Natural killer cell (primary cell): ENCODE measurements at regions of chr9 and their contacts with region 1.

Region 1: GRCh38 chr9:34178520-34179212 is at the start of gene UBAP1:
- DNase-seq: peak; percentile 93 to 98
- ATAC-seq: peak; percentile 95 to 99 (median 97)
- H3K4me3 ChIP-seq: peak within 1 kb of the TSS; percentile 83
- H3K4me3 Mint-ChIP-seq: peak within 1 kb of the TSS; percentile 98
- H3K27ac ChIP-seq: peak within 1 kb of the TSS; percentile 95
- H3K27ac Mint-ChIP-seq: peak within 1 kb of the TSS; percentile 97 to 98
- H3K4me1 ChIP-seq: peaks cover 27% of the 10 kb centered on the region
- H3K4me1 Mint-ChIP-seq: peaks cover 26 to 28% of the 10 kb centered on the region in 2 donors
- H3K27me3 ChIP-seq: no peaks in the 10 kb centered on the region
- H3K27me3 Mint-ChIP-seq: no peaks in the 10 kb centered on the region
- CTCF ChIP-seq: no peak
- total RNA-seq, gene UBAP1: 43.6 to 59.3 (median 49.7) TPM

Region 2: DNA sequence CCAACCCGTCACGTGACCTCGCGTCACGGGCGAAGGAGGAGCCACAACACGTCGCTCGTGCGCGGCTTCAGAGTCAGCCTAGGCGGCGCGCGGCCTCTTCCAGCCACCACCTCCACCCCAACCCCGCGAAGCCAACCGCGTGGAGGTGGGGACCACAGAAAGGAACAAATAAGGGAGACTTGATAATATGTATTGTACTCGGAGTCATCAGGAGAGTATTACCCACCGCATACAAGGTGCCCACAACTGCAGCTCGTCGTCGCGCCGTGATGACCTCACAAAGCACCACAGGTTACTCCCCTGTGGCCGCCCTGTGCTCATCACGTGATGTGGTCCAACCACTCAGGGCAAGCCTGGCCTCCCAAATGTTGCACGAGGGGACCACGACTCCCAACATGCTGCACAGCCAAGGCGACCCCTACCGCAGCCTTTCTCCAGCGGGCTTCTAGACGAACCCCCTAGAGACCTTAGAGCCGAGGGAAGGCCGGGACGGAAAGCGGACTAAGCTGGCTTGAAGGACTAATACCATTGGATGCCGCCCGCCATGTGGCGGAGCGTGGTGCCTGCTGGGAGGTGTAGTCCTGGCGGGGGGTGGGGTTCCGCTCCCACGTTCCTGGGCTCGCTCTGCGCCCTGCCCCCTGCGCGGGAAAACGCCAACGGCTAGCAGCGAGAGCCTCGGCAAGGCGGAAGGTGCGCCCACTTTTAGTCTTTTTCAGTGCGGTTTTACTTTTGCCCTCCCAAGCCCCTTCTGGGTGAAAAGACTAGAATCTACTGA is 129.6 kb before region 1 on chr9:
- intact Hi-C with region 1: loop called (anchors 2 kb)
- DNase-seq: peak; percentile 98
- ATAC-seq: peak; percentile 83 to 94 (median 86)
- H3K4me3 ChIP-seq: peak overlapping the region; percentile 88
- H3K4me3 Mint-ChIP-seq: peak overlapping the region; percentile 96
- H3K27ac ChIP-seq: peak overlapping the region; percentile 82
- H3K27ac Mint-ChIP-seq: peak overlapping the region; percentile 99
- H3K4me1 ChIP-seq: peaks cover 16% of the 10 kb centered on the region
- H3K4me1 Mint-ChIP-seq: peaks cover 24 to 30% of the 10 kb centered on the region in 2 donors
- H3K27me3 ChIP-seq: no peaks in the 10 kb centered on the region
- H3K27me3 Mint-ChIP-seq: no peaks in the 10 kb centered on the region
- CTCF ChIP-seq: no peak

Region 3: GRCh38 chr9:34190996-34191892 is 12.6 kb after region 1 on chr9:
- intact Hi-C with region 1: loop called (anchors 2 kb)
- DNase-seq: no peak
- ATAC-seq: no peak
- H3K4me3 ChIP-seq: no peak overlapping the region
- H3K4me3 Mint-ChIP-seq: peak overlapping the region; percentile 45
- H3K27ac ChIP-seq: no peak overlapping the region
- H3K27ac Mint-ChIP-seq: peak overlapping the region; percentile 71 to 73
- H3K4me1 ChIP-seq: peaks cover 46% of the 10 kb centered on the region
- H3K4me1 Mint-ChIP-seq: peaks cover 47 to 50% of the 10 kb centered on the region in 2 donors
- H3K27me3 ChIP-seq: no peaks in the 10 kb centered on the region
- H3K27me3 Mint-ChIP-seq: no peaks in the 10 kb centered on the region
- CTCF ChIP-seq: no peak

Region 4: DNA sequence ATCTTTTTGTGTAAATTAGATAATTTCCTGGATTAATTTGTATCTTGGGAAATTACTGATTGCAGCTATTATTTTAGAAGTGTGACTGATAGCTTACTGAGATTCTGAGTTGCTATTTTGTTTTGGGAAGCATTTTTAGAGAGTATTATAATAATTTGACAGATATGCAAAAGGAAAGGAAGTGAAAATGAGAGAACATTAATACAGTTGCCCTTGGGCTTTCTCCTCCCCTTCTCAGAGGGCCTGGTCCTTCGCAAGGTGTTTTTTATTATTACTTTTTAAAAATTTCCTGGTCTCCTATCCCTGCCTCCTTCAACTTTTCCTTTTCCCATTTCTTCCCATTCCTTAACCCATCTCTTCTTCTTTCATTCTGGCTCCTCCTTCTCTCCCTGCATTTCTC is 32.7 kb after region 1 on chr9:
- intact Hi-C with region 1: loop called (anchors 5 kb)
- DNase-seq: no peak
- ATAC-seq: no peak
- H3K4me3 ChIP-seq: no peak overlapping the region
- H3K4me3 Mint-ChIP-seq: no peak overlapping the region
- H3K27ac ChIP-seq: no peak overlapping the region
- H3K27ac Mint-ChIP-seq: peak overlapping the region in 1 of 2 donors; percentile 29
- H3K4me1 ChIP-seq: no peaks in the 10 kb centered on the region
- H3K4me1 Mint-ChIP-seq: peaks cover 44 to 49% of the 10 kb centered on the region in 2 donors
- H3K27me3 ChIP-seq: no peaks in the 10 kb centered on the region
- H3K27me3 Mint-ChIP-seq: no peaks in the 10 kb centered on the region
- CTCF ChIP-seq: no peak

Region 5: GRCh38 chr9:34252670-34253459 is 74.2 kb after region 1 on chr9:
- intact Hi-C with region 1: loop called (anchors 2 kb)
- DNase-seq: peak; percentile 66 to 82
- ATAC-seq: peak; percentile 75 to 91 (median 77)
- H3K4me3 ChIP-seq: no peak overlapping the region
- H3K4me3 Mint-ChIP-seq: no peak overlapping the region
- H3K27ac ChIP-seq: no peak overlapping the region
- H3K27ac Mint-ChIP-seq: peak overlapping the region; percentile 43 to 62
- H3K4me1 ChIP-seq: peaks cover 6% of the 10 kb centered on the region
- H3K4me1 Mint-ChIP-seq: no peaks in the 10 kb centered on the region
- H3K27me3 ChIP-seq: no peaks in the 10 kb centered on the region
- H3K27me3 Mint-ChIP-seq: no peaks in the 10 kb centered on the region
- CTCF ChIP-seq: peak; percentile 96

Region 6: GRCh38 chr9:34262939-34263338 is 84.3 kb after region 1 on chr9:
- intact Hi-C with region 1: no loop called
- DNase-seq: no peak
- ATAC-seq: no peak
- H3K4me3 ChIP-seq: no peak overlapping the region
- H3K4me3 Mint-ChIP-seq: no peak overlapping the region
- H3K27ac ChIP-seq: no peak overlapping the region
- H3K27ac Mint-ChIP-seq: no peak overlapping the region
- H3K4me1 ChIP-seq: no peaks in the 10 kb centered on the region
- H3K4me1 Mint-ChIP-seq: no peaks in the 10 kb centered on the region
- H3K27me3 ChIP-seq: no peaks in the 10 kb centered on the region
- H3K27me3 Mint-ChIP-seq: no peaks in the 10 kb centered on the region
- CTCF ChIP-seq: no peak